Mammary epithelial cell (primary cell): ENCODE measurements at regions of chr1 and their contacts with region 1.

Region 1: GRCh38 chr1:35683012-35683411 is 35.7 kb downstream of the C1orf216 start:
- DNase-seq: no peak
- H3K4me3 ChIP-seq: no peak overlapping the region
- H3K27ac ChIP-seq: no peak overlapping the region
- H3K4me1 ChIP-seq: no peaks in the 10 kb centered on the region
- H3K27me3 ChIP-seq: no peaks in the 10 kb centered on the region
- CTCF ChIP-seq: no peak

Region 2: GRCh38 chr1:35557292-35558063 is 125.5 kb before region 1 on chr1 and contains the starts of genes KIAA0319L and NCDN:
- CTCF ChIA-PET with region 1: interaction called, 38 read pairs
- dilution Hi-C with region 1: no loop called
- in situ Hi-C with region 1: no loop called
- intact Hi-C with region 1: no loop called
- DNase-seq: peak; percentile 97
- H3K4me3 ChIP-seq: peak within 1 kb of the TSS; percentile 85 to 96 (median 90)
- H3K27ac ChIP-seq: peak within 1 kb of the TSS; percentile 69
- H3K4me1 ChIP-seq: peaks cover 55% of the 10 kb centered on the region
- H3K27me3 ChIP-seq: no peaks in the 10 kb centered on the region
- CTCF ChIP-seq: no peak
- total RNA-seq, gene KIAA0319L: 38.1 to 68.2 TPM
- total RNA-seq, gene NCDN: 21.8 to 35.1 TPM

Region 3: DNA sequence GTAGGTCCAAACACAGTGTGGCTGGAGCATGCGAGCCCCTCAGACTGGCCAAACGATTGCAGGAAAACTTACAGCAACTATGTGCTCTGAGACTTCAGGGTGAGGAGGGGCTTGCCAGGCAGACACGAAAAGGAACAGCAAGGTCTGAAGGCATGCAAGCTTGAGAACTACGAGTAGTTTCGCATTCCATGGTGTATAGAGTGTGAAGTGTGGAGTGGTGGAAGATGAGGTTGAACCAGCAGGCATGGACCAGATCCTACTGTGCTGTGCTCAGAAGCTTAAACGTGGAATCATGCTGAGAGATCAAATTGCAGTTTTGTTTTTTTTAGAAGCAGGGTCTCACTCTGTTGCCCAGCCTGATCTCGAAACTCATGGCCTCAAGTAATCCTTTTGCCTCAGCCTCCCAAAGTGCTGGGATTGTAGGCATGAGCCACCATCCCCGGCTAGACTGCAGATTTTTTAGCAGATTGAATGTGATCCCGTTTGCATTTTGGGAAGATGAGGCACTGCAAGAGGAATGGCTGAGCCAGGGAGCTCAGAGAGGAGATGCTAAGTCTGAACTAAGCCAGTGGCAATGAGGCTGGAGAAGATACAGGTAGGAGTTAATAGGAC is 115.0 kb before region 1 on chr1:
- CTCF ChIA-PET with region 1: no interaction called
- dilution Hi-C with region 1: no loop called
- in situ Hi-C with region 1: no loop called
- intact Hi-C with region 1: no loop called
- DNase-seq: no peak
- H3K4me3 ChIP-seq: no peak overlapping the region
- H3K27ac ChIP-seq: no peak overlapping the region
- H3K4me1 ChIP-seq: peaks cover 21% of the 10 kb centered on the region
- H3K27me3 ChIP-seq: no peaks in the 10 kb centered on the region
- CTCF ChIP-seq: no peak